ENCODE measurements at regions of chr18 and their contacts with region 1.

Region 1: GRCh38 chr18:55251254-55251971 is 292.2 kb upstream of the CCDC68 start:
- DNase-seq: no peak
- ATAC-seq: peak; percentile 23; the same call in 2 of the 3 replicates
- H3K4me3 ChIP-seq: peak overlapping the region; percentile 37; the same call in 1 of the 2 replicates
- H3K27ac ChIP-seq: peak overlapping the region; percentile 71
- H3K4me1 ChIP-seq: peaks cover 57% of the 10 kb centered on the region
- H3K27me3 ChIP-seq: no peaks in the 10 kb centered on the region
- CTCF ChIP-seq: no peak
- EP300 ChIP-seq: no peak
- POLR2A ChIP-seq: no peak
- RAD21 ChIP-seq: no peak

Region 2: GRCh38 chr18:54750350-54750749 is 501.1 kb before region 1 on chr18:
- CTCF ChIA-PET with region 1: no interaction called
- POLR2A ChIA-PET with region 1: no interaction called
- RAD21 ChIA-PET with region 1: no interaction called
- SMC1A ChIA-PET with region 1: no interaction called
- in situ Hi-C with region 1: no loop called
- intact Hi-C with region 1: no loop called
- DNase-seq: no peak
- ATAC-seq: no peak
- H3K4me3 ChIP-seq: no peak overlapping the region
- H3K27ac ChIP-seq: no peak overlapping the region
- H3K4me1 ChIP-seq: no peaks in the 10 kb centered on the region
- H3K27me3 ChIP-seq: no peaks in the 10 kb centered on the region; a peak in 2 of 4 replicates
- CTCF ChIP-seq: no peak
- EP300 ChIP-seq: no peak
- POLR2A ChIP-seq: no peak
- RAD21 ChIP-seq: no peak

Region 3: GRCh38 chr18:55280503-55280902 is 29.1 kb after region 1 on chr18:
- CTCF ChIA-PET with region 1: interaction called, 6 read pairs
- POLR2A ChIA-PET with region 1: no interaction called
- RAD21 ChIA-PET with region 1: interaction called, 3 read pairs
- SMC1A ChIA-PET with region 1: interaction called, 11 read pairs
- in situ Hi-C with region 1: no loop called
- intact Hi-C with region 1: no loop called
- DNase-seq: no peak
- ATAC-seq: no peak
- H3K4me3 ChIP-seq: no peak overlapping the region
- H3K27ac ChIP-seq: peak overlapping the region; percentile 26; the same call in 1 of the 2 replicates
- H3K4me1 ChIP-seq: peaks cover 10% of the 10 kb centered on the region; the same call in 1 of the 2 replicates
- H3K27me3 ChIP-seq: no peaks in the 10 kb centered on the region
- CTCF ChIP-seq: no peak
- EP300 ChIP-seq: no peak
- POLR2A ChIP-seq: no peak
- RAD21 ChIP-seq: no peak

Region 4: DNA sequence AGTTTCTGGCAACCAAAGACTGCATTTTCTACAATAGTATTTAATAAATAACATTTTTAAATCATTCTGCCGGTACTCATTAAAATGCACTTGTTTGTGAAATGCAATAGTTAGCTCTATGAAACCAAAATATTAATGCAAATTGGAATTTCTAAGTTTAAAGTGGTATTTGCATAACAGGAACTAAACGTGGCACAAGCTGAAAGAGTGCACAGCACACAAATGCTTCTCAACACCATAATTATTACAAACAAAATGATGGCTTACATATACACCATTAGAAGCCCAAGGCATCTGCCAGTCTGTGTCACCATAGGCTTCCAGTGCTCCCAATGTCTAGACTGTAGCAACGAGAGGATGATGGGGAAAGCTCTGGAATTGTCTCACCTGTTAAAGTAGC is 56.1 kb after region 1 on chr18:
- CTCF ChIA-PET with region 1: interaction called, 10 read pairs
- POLR2A ChIA-PET with region 1: interaction called, 17 read pairs
- RAD21 ChIA-PET with region 1: interaction called, 5 read pairs
- SMC1A ChIA-PET with region 1: interaction called, 15 read pairs
- in situ Hi-C with region 1: no loop called
- intact Hi-C with region 1: no loop called
- DNase-seq: no peak
- ATAC-seq: peak; percentile 45
- H3K4me3 ChIP-seq: peak overlapping the region; percentile 29; the same call in 1 of the 2 replicates
- H3K27ac ChIP-seq: peak overlapping the region; percentile 43
- H3K4me1 ChIP-seq: peaks cover 13% of the 10 kb centered on the region; the same call in 1 of the 2 replicates
- H3K27me3 ChIP-seq: no peaks in the 10 kb centered on the region
- CTCF ChIP-seq: no peak
- EP300 ChIP-seq: no peak
- POLR2A ChIP-seq: no peak
- RAD21 ChIP-seq: no peak